Activated CD4-positive, alpha-beta T cell treated with anti-CD3 and anti-CD28 coated beads, Interleukin-2, amount 10 ng/mL, durations not matched to agents 24 days and 14 days (primary cell): ENCODE measurements at regions of chr2 and their contacts with region 1.

Region 1: DNA sequence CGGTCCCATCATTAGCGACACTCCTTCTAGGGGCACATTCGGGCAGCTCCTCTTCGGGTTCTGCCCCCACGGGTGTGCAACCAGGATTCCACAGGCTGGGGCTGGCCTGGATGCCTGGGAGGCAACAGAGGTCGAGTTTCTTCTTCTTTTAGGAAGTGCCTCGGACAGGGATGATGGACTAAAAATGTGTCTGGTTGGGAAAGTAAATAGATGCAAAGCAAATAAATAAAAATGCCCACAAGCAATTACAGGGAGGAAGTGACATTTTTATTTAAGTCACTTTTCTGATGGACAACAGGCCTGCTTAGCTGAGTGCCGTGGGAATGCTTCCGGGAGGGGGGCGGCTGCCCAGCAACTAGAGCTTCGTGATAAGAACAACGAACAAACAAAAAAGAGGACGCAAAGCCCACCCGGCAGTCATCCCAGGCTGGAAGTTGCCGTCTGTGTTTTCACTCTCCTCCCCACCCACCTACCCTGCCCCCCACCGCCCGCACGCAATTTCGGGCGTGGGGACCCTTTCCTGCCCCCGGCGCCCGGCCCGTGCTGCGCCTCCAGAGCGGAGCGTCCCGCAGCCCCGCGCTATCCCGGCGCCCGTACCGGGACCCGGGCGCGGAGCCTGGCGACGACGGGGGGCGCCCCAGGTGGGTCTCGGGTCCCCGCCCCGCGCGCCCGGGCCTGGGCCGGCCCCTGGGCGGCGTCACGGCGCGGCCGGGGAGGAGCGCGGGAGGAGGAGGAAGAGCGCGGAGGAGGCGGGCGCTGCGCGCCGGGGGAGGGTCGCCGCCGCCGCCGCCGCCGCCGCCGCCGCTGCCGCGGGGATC is 412 bp upstream of the NCK2 start:
- DNase-seq: peak; percentile 93
- H3K4me3 Mint-ChIP-seq: peak overlapping the region; percentile 83
- H3K27ac Mint-ChIP-seq: peak overlapping the region; percentile 90
- H3K4me1 Mint-ChIP-seq: peaks cover 65% of the 10 kb centered on the region
- H3K27me3 Mint-ChIP-seq: no peaks in the 10 kb centered on the region

Region 2: GRCh38 chr2:105398699-105399432 is 345.4 kb before region 1 on chr2 and contains the start of gene FHL2:
- intact Hi-C with region 1: loop called (anchors 10 kb)
- DNase-seq: peak; percentile 93
- H3K4me3 Mint-ChIP-seq: peak within 1 kb of the TSS; percentile 81
- H3K27ac Mint-ChIP-seq: peak within 1 kb of the TSS; percentile 67
- H3K4me1 Mint-ChIP-seq: peaks cover 10% of the 10 kb centered on the region
- H3K27me3 Mint-ChIP-seq: peaks cover 35% of the 10 kb centered on the region
- total RNA-seq, gene FHL2: 2.4 and 3.8 TPM in 2 replicates

Region 3: GRCh38 chr2:105595536-105595935 is 148.8 kb before region 1 on chr2:
- intact Hi-C with region 1: no loop called
- DNase-seq: no peak
- H3K4me3 Mint-ChIP-seq: no peak overlapping the region
- H3K27ac Mint-ChIP-seq: no peak overlapping the region
- H3K4me1 Mint-ChIP-seq: peaks cover 2% of the 10 kb centered on the region
- H3K27me3 Mint-ChIP-seq: no peaks in the 10 kb centered on the region

Region 4: DNA sequence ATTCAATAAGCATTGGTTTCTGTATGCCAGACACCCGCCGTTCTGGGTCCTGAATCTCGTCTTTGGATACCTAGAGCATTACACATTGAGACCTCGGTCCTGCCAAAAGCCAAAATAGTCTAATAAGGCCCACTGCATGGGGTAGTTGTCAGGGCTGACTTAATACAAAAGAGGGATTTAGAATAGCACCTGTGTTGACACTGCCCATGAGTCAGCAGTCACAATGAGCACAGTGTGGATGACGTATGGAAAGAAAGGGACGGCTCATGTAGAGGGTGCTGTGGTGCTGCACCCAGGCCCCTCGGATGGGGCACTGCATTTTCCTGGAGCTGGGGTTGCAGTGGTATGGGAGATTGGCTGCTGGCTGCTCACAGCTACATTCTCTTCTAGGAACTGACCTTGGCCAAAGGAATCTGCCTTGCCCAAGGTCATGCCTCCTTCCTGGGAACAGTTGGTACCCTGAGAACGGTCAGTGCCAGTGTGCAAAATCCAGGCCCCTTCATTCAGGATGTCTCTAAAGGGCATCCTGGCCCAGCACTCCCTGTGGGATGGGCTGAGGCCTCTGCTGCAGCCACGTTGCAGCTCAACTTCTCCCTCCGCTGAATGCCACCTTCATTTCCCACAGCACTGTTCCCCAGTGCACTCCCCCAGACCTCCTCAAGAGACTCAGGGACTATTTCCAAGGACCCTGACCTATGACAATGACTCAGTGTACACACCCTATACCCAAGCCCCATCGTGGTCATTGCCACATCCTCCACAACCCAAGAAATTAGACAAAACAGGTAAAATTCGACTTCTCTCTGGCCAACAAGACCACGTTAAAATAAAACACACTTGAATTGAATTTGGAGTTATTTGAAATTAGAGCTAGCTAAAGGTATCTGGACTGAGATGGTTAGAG is 126.3 kb before region 1 on chr2:
- intact Hi-C with region 1: no loop called
- DNase-seq: no peak
- H3K4me3 Mint-ChIP-seq: no peak overlapping the region
- H3K27ac Mint-ChIP-seq: no peak overlapping the region
- H3K4me1 Mint-ChIP-seq: peaks cover 5% of the 10 kb centered on the region
- H3K27me3 Mint-ChIP-seq: peaks cover 17% of the 10 kb centered on the region

Region 5: DNA sequence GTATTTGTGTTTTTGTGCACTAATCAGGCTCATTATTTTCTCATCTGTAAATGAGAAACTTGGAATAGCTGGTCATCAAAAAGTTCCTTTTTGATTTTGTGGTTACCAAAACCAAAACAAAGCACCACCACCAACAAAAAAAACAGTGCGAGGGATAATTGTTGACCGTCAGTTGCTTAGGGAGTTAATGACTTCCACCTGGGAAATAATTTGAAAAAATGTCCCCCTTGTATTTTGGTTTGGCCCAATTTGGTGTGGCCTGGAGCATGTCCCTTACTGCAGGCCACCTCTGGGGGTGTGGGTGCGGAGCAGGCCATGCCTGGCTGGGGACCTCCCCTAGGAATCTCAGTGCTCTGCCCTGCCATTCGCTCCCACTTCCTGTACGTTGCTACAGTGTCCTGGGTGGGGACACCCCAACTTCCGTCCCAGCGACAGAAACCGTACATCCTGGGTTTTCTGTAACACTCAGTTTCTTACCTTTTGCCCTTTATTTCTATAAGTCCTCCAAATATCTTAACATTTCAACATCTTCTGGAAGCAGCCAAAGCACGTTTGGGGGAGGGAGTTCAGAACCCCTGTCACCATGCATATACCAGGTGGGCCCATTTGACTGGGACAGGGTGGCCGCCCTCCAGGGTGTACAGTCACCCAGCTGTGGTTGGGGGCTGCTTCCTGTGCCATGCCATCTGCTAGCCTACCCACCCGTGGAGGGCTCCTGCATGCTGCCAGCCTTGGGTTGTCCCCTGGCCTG is 31.7 kb after region 1 on chr2:
- intact Hi-C with region 1: loop called (anchors 1 kb)
- DNase-seq: peak; percentile 81
- H3K4me3 Mint-ChIP-seq: peak overlapping the region; percentile 71
- H3K27ac Mint-ChIP-seq: peak overlapping the region; percentile 81
- H3K4me1 Mint-ChIP-seq: peaks cover 78% of the 10 kb centered on the region
- H3K27me3 Mint-ChIP-seq: no peaks in the 10 kb centered on the region

Region 6: DNA sequence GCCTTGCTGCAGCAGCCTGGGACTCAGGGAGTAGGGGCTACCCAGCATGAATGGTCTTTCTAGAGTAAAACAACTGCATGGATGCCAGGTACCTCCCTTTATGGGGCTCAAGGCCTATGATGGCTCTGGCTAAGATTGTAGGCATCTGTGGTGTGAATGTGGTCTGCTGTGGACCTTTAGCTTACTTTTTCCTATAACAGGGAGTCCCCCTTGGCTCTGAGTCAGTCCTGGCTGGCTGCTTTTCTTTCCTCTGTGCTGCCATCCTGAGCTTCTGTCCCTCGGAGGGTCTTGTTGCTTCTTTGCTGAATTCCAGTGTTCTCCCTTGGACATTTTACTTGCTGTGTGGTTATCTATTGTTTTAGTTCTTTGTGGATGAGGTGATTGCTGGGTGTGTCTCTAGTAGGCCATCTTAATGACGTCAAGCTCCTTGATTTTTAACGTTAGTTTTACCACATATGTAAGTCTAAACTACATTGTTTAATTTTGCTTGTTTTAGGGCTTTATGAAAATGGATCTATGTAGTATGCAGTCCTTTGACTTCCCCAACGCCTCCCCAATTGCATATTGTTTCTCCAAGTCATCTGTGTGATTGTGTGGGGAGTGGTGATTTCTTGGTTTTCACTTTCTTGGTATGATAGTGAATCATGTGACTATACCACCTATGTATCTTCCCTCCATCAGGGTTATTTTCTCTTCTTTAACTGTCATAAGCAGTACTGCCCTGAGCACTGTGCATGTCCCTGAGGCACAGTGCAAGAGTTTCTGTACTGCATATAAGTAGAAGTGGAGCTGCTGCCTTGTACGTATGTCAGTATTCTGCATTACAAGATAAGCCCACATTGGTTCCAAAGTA is 92.8 kb after region 1 on chr2:
- intact Hi-C with region 1: loop called (anchors 2 kb)
- DNase-seq: no peak
- H3K4me3 Mint-ChIP-seq: peak overlapping the region; percentile 52
- H3K27ac Mint-ChIP-seq: peak overlapping the region; percentile 77
- H3K4me1 Mint-ChIP-seq: peaks cover 73% of the 10 kb centered on the region
- H3K27me3 Mint-ChIP-seq: no peaks in the 10 kb centered on the region

Region 7: GRCh38 chr2:105929516-105929915 is 185.2 kb after region 1 on chr2:
- intact Hi-C with region 1: loop called (anchors 2 kb)
- DNase-seq: peak; percentile 79
- H3K4me3 Mint-ChIP-seq: peak overlapping the region; percentile 44
- H3K27ac Mint-ChIP-seq: peak overlapping the region; percentile 66
- H3K4me1 Mint-ChIP-seq: peaks cover 42% of the 10 kb centered on the region
- H3K27me3 Mint-ChIP-seq: no peaks in the 10 kb centered on the region

Region 8: GRCh38 chr2:106193977-106194778 is 449.9 kb after region 1 on chr2 and contains the start of gene UXS1:
- intact Hi-C with region 1: loop called (anchors 5 kb)
- DNase-seq: peak; percentile 99
- H3K4me3 Mint-ChIP-seq: peak within 1 kb of the TSS; percentile 90
- H3K27ac Mint-ChIP-seq: peak within 1 kb of the TSS; percentile 89
- H3K4me1 Mint-ChIP-seq: peaks cover 38% of the 10 kb centered on the region
- H3K27me3 Mint-ChIP-seq: peaks cover 11% of the 10 kb centered on the region
- total RNA-seq, gene UXS1: 34.9 and 37.6 TPM in 2 replicates